Dendritic cell treated with granulocyte-macrophage colony-stimulating factor and Interleukin-4, amounts not matched to agents 40 ng/mL and 50 ng/mL, for 4 days (primary cell): ENCODE measurements at regions of chr12 and their contacts with region 1.

Region 1: DNA sequence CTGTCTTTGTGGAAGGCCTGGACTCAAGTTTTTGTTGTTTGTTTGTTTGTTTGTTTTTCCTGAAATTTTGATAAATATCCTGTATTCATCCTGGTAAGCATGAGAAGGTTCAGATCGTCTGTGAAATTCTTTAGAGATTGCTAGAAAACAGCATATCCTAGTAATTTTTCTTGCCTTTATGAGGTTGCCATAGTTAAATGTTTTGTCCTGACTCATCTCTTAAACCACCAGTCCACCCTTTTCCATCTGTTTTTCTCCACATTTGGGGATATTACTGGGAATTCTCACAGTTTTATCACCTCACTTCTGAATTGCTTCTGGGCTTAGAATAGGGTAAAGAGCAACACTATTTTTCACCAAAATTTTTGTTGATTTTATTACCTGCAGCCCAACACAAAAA is 248.3 kb downstream of the FBXL14 start:
- H3K4me3 Mint-ChIP-seq: no peak overlapping the region
- H3K27ac Mint-ChIP-seq: no peak overlapping the region
- H3K4me1 Mint-ChIP-seq: peaks cover 6% of the 10 kb centered on the region
- H3K27me3 Mint-ChIP-seq: no peaks in the 10 kb centered on the region

Region 2: DNA sequence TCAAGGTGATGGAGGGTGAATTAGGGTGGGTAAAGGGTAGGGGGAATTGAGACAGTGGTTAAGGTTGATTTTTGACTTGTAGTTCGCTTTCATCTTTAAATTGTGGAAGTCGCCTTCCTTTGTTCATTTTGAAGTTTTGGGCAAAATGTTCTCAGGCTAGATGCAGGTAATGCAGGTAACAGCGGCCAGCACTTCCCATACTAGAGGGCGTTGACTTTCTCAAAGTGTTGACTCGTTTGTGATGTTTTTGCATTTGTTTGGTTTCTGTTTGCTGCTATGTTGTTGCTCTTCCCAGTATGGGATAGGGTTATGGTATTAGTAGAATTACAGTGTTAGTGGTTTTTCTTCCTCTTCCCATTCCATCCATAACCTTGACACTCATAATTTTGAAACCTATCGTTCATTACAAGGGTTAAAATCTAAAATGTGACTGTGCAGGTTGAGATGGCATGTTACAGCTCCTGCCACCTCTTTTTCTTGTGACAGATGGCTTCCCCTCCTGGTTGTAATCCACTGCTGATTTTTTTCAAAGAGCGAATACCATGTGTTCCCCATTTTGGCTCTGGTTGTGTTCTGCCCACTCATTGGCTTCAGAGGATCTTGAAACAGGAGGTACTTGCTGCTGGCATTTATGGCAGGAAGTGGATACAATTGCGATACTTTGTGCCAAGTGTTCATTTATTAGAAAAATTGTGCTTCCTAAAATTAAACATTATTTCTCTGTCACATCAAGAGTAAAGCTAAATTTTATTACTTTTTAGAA is 298.0 kb before region 1 on chr12:
- intact Hi-C with region 1: no loop called
- H3K4me3 Mint-ChIP-seq: peak overlapping the region; percentile 75
- H3K27ac Mint-ChIP-seq: peak overlapping the region; percentile 88
- H3K4me1 Mint-ChIP-seq: peaks cover 26% of the 10 kb centered on the region
- H3K27me3 Mint-ChIP-seq: no peaks in the 10 kb centered on the region

Region 3: GRCh38 chr12:1289371-1290155 is 56.6 kb before region 1 on chr12:
- intact Hi-C with region 1: loop called (anchors 10 kb)
- H3K4me3 Mint-ChIP-seq: no peak overlapping the region
- H3K27ac Mint-ChIP-seq: peak overlapping the region; percentile 72
- H3K4me1 Mint-ChIP-seq: peaks cover 24% of the 10 kb centered on the region
- H3K27me3 Mint-ChIP-seq: no peaks in the 10 kb centered on the region